ENCODE measurements at regions of chr4 and their contacts with region 1.

Region 1: GRCh38 chr4:445410-445809 is 53.5 kb downstream of the ZNF721 start:
- DNase-seq: no peak
- H3K4me3 Mint-ChIP-seq: no peak overlapping the region
- H3K27ac Mint-ChIP-seq: no peak overlapping the region
- H3K4me1 Mint-ChIP-seq: peaks cover 1% of the 10 kb centered on the region
- H3K27me3 Mint-ChIP-seq: no peaks in the 10 kb centered on the region

Region 2: GRCh38 chr4:124275-125081 is 320.9 kb before region 1 on chr4 and contains the start of gene ZNF718:
- CTCF ChIA-PET with region 1: no interaction called
- intact Hi-C with region 1: no loop called
- DNase-seq: peak; percentile 98
- H3K4me3 Mint-ChIP-seq: peak within 1 kb of the TSS; percentile 90
- H3K27ac Mint-ChIP-seq: peak within 1 kb of the TSS; percentile 98
- H3K4me1 Mint-ChIP-seq: peaks cover 22% of the 10 kb centered on the region
- H3K27me3 Mint-ChIP-seq: no peaks in the 10 kb centered on the region
- total RNA-seq, gene ZNF718: 12.2 to 12.8 TPM

Region 3: DNA sequence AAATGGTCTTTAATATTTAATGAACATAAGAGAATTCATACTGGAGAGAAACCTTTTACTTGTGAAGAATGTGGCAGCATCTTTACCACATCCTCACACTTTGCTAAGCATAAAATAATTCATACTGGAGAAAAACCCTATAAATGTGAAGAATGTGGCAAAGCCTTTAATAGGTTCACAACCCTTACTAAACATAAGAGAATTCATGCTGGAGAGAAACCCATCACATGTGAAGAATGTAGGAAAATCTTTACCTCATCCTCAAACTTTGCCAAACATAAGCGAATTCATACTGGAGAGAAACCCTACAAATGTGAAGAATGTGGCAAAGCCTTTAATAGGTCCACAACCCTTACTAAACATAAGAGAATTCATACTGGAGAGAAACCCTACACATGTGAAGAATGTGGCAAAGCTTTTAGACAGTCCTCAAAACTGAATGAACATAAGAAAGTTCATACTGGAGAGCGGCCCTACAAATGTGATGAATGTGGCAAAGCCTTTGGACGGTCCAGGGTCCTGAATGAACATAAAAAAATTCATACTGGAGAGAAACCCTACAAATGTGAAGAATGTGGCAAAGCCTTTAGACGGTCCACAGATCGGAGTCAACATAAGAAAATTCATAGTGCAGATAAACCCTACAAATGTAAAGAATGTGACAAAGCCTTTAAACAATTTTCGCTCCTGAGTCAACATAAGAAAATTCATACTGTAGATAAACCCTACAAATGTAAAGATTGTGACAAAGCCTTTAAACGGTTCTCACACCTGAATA is 72.2 kb before region 1 on chr4:
- CTCF ChIA-PET with region 1: no interaction called
- intact Hi-C with region 1: loop called (anchors 10 kb)
- DNase-seq: no peak
- H3K4me3 Mint-ChIP-seq: no peak overlapping the region
- H3K27ac Mint-ChIP-seq: no peak overlapping the region
- H3K4me1 Mint-ChIP-seq: no peaks in the 10 kb centered on the region
- H3K27me3 Mint-ChIP-seq: no peaks in the 10 kb centered on the region

Region 4: DNA sequence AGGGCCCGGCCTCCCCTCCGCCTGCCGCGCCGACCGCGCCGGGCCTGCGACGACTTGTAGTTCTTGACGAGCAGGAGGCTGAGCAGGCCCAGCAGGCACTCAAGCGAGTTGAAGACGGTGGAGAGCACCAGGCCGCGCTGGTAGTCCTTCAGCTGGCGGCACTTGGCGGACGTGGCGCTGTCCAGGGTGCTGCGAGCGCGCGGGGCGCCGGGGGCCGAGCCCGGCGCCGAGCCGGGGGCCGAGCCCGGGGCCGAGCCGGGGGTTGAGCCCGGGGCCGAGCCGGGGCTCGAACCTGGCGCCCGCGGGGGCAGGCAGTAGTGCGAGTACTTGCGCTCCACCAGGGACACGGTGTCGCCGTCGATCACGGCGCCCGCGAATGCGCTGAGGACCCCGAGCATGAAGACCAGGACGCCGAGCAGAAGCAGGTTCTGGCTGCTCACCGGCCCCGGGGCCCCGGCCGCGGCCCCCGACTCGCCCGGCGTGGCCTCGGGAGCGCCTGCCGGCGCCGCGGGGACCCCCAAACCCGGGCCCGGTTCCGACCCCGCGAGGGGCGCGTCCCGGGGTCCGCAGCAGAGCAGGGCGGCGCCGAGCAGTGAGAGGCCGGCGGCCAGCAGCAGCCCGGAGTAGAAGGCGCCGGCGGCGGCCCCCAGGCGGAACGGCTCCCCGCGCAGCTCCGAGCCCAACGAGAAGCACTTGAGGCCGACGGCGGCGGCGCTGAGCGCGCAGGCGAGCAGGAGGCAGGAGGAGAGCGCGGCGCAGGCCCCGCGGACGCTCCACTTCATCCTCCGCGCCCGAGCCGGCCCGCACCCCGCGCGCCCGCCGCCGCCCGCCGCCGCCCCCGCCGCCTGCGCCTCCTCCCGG is 130.1 kb after region 1 on chr4:
- CTCF ChIA-PET with region 1: no interaction called
- intact Hi-C with region 1: no loop called
- DNase-seq: peak; percentile 19
- H3K4me3 Mint-ChIP-seq: no peak overlapping the region
- H3K27ac Mint-ChIP-seq: no peak overlapping the region
- H3K4me1 Mint-ChIP-seq: peaks cover 12% of the 10 kb centered on the region
- H3K27me3 Mint-ChIP-seq: peaks cover 62% of the 10 kb centered on the region

Measured in activated naive CD4-positive, alpha-beta T cell treated with anti-CD3 and anti-CD28 coated beads for 36 hours (primary cell).